ENCODE measurements at regions of chr7 and their contacts with region 1.

Region 1: GRCh38 chr7:26500749-26501352 is 209.2 kb downstream of the SNX10 start:
- DNase-seq: no peak
- ATAC-seq: no peak
- H3K4me3 ChIP-seq: no peak overlapping the region
- H3K27ac ChIP-seq: no peak overlapping the region
- H3K4me1 ChIP-seq: no peaks in the 10 kb centered on the region
- H3K27me3 ChIP-seq: no peaks in the 10 kb centered on the region
- CTCF ChIP-seq: peak; percentile 53

Region 2: DNA sequence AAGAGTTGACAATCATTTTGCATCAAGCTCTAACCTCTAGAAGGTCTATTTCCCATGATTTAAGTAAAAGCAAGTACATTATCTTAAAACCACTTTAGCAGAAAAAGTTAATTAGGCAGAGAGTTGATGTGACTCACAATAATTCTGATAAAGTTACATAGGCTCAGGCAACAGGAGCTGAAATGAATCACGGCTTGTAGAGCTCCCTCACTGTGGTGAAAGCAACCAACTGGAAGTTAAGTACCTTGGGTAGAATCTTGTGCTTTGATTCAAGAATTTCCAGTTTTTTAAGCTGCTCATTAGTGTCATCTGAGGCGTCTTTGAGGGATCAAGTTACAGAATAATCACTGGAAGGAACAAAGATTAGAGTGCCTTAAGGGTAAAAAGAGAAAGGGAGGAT is 417.7 kb before region 1 on chr7:
- intact Hi-C with region 1: loop called in 1 of 2 experiments (anchors 10 kb)
- DNase-seq: no peak
- ATAC-seq: no peak
- H3K4me3 ChIP-seq: no peak overlapping the region
- H3K27ac ChIP-seq: no peak overlapping the region
- H3K4me1 ChIP-seq: no peaks in the 10 kb centered on the region
- H3K27me3 ChIP-seq: peaks cover 0 to 23% (median 6%) of the 10 kb centered on the region in 3 donors
- CTCF ChIP-seq: no peak

Region 3: GRCh38 chr7:26117142-26117807 is 383.6 kb before region 1 on chr7:
- intact Hi-C with region 1: no loop called
- DNase-seq: no peak
- ATAC-seq: no peak
- H3K4me3 ChIP-seq: no peak overlapping the region
- H3K27ac ChIP-seq: no peak overlapping the region
- H3K4me1 ChIP-seq: no peaks in the 10 kb centered on the region
- H3K27me3 ChIP-seq: peaks cover 0 to 5% (median 2%) of the 10 kb centered on the region in 3 donors
- CTCF ChIP-seq: no peak

Region 4: GRCh38 chr7:26376175-26376917 is 124.5 kb before region 1 on chr7:
- intact Hi-C with region 1: loop called in 1 of 2 experiments (anchors 2 kb)
- DNase-seq: peak; percentile 28 to 60
- ATAC-seq: peak; percentile 25 to 47 (median 43)
- H3K4me3 ChIP-seq: peak overlapping the region; percentile 55
- H3K27ac ChIP-seq: no peak overlapping the region
- H3K4me1 ChIP-seq: peaks cover 5% of the 10 kb centered on the region
- H3K27me3 ChIP-seq: peaks cover 6 to 81% (median 19%) of the 10 kb centered on the region in 3 donors
- CTCF ChIP-seq: no peak

Region 5: DNA sequence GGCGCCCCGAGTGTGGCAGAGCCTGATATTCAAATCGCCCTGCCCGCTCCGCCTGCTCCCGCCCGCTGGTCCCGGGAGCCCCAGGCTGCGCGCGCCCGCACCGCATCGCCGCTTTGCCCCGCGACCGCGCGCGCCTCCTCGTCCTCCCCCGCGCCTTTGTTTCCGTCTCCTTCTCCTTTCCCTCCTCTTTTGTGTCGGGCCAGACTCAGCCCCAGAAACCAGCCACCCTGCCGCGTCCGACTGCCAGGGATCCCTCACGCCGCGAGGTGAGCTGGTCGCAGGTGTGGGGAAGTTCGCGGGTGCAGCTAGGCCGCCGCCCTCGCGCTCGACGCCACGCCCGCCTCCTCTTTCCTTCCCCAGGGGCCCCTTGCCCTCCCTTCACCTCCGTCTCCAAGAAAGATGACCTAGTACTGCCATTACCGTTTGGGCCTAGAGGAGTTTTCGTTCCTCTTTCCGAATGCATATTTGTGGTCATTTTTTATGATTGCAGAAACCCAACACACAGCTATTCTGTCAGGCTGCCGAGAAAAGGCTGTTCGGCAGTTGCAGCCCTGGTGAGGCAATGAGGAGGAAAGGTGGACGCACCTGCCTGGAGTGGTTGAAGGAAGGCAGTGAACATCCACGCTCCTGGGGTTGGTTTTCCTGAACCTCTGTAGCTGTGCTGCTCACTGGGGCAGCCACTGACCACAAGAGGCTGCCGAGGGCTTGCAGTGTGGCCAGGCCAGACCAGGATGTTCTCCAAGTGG is 101.9 kb before region 1 on chr7:
- intact Hi-C with region 1: loop called in 1 of 2 experiments (anchors 5 kb)
- DNase-seq: peak; percentile 61 to 67
- ATAC-seq: peak; percentile 60 to 70 (median 63)
- H3K4me3 ChIP-seq: peak overlapping the region; percentile 89
- H3K27ac ChIP-seq: peak overlapping the region; percentile 99
- H3K4me1 ChIP-seq: peaks cover 12% of the 10 kb centered on the region
- H3K27me3 ChIP-seq: no peaks in the 10 kb centered on the region
- CTCF ChIP-seq: peak; percentile 33

Region 6: DNA sequence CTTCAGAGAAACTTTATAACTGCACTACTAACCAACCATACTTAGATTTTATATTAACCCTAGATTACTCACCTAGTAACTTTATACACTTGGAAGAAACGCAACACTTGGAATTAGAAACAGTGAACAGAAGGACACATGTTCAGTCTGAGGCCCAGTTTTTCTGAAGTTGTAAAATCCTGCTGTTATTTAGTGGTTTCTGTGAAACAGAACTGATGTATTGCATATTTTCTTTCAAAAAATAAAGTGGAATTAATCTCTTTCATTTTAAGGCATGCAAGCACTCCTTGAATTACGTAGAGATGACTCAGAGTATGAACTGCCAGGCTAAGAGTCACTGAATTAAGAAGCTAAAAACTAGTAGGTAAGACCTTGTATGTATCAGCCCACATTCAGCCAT is 147.7 kb after region 1 on chr7:
- intact Hi-C with region 1: loop called in 1 of 2 experiments (anchors 10 kb)
- DNase-seq: no peak
- ATAC-seq: no peak
- H3K4me3 ChIP-seq: no peak overlapping the region
- H3K27ac ChIP-seq: no peak overlapping the region
- H3K4me1 ChIP-seq: no peaks in the 10 kb centered on the region
- H3K27me3 ChIP-seq: no peaks in the 10 kb centered on the region
- CTCF ChIP-seq: no peak

Measured in psoas muscle (tissue), 8 donors.